ENCODE measurements at regions of chr5 and their contacts with region 1.

Region 1: DNA sequence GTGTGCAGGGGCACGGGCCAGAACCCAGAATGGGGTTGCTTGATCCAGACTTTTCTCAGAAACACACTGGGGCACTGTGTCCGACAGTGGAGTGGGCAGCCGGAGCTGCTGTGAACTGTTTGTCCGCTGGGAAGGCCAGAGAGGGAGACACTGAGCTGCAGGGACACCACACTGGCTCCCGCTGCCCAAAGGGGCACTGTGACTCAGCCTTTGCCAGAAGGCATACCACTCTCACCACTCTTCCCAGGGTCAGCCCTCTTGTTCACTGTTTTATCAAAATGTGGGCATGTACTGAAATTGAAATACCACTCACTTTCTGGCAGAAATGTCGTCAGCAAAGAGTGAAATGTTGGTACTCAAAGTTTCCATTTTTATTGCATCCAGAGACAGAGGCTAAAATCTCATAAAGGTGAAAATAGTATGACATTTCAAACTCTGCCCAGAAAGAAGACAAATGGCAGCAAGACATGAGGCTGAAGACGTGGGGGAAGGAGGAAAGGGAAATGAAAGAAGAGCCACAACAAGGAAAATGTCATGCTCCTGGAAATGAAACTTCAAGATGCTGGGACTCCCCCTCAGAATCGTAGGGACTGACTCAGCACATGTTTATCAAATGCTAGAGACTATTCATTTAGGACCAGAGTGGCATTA is 4.5 kb upstream of the IL7R start:
- DNase-seq: peak; percentile 60 to 81 (median 62)
- H3K4me3 ChIP-seq: peak overlapping the region; percentile 54 to 71
- H3K4me3 Mint-ChIP-seq: peak overlapping the region; percentile 87 to 99 (median 95)
- H3K27ac ChIP-seq: peak overlapping the region; percentile 97
- H3K27ac Mint-ChIP-seq: peak overlapping the region; percentile 94 to 100 (median 100)
- H3K4me1 ChIP-seq: peaks cover 75% of the 10 kb centered on the region
- H3K4me1 Mint-ChIP-seq: peaks cover 52 to 85% (median 70%) of the 10 kb centered on the region in 4 donors
- H3K27me3 ChIP-seq: no peaks in the 10 kb centered on the region
- H3K27me3 Mint-ChIP-seq: no peaks in the 10 kb centered on the region

Region 2: GRCh38 chr5:35308421-35308820 is 543.8 kb before region 1 on chr5:
- CTCF ChIA-PET with region 1: no interaction called
- POLR2A ChIA-PET with region 1: no interaction called
- intact Hi-C with region 1: no loop called
- DNase-seq: no peak
- H3K4me3 ChIP-seq: no peak overlapping the region
- H3K4me3 Mint-ChIP-seq: no peak overlapping the region
- H3K27ac ChIP-seq: no peak overlapping the region
- H3K27ac Mint-ChIP-seq: no peak overlapping the region
- H3K4me1 ChIP-seq: no peaks in the 10 kb centered on the region
- H3K4me1 Mint-ChIP-seq: no peaks in the 10 kb centered on the region
- H3K27me3 ChIP-seq: no peaks in the 10 kb centered on the region
- H3K27me3 Mint-ChIP-seq: peaks cover 6 to 11% of the 10 kb centered on the region in 2 donors

Region 3: GRCh38 chr5:35672995-35673394 is 179.2 kb before region 1 on chr5:
- CTCF ChIA-PET with region 1: no interaction called
- POLR2A ChIA-PET with region 1: interaction called, 64 read pairs
- intact Hi-C with region 1: no loop called
- DNase-seq: peak; percentile 32 to 63 (median 54)
- H3K4me3 ChIP-seq: no peak overlapping the region
- H3K4me3 Mint-ChIP-seq: peak overlapping the region in 7 of 8 donors; percentile 31 to 76 (median 47)
- H3K27ac ChIP-seq: peak overlapping the region; percentile 7
- H3K27ac Mint-ChIP-seq: peak overlapping the region; percentile 68 to 92 (median 86)
- H3K4me1 ChIP-seq: peaks cover 58% of the 10 kb centered on the region
- H3K4me1 Mint-ChIP-seq: peaks cover 43 to 68% (median 54%) of the 10 kb centered on the region in 4 donors
- H3K27me3 ChIP-seq: no peaks in the 10 kb centered on the region
- H3K27me3 Mint-ChIP-seq: no peaks in the 10 kb centered on the region

Region 4: DNA sequence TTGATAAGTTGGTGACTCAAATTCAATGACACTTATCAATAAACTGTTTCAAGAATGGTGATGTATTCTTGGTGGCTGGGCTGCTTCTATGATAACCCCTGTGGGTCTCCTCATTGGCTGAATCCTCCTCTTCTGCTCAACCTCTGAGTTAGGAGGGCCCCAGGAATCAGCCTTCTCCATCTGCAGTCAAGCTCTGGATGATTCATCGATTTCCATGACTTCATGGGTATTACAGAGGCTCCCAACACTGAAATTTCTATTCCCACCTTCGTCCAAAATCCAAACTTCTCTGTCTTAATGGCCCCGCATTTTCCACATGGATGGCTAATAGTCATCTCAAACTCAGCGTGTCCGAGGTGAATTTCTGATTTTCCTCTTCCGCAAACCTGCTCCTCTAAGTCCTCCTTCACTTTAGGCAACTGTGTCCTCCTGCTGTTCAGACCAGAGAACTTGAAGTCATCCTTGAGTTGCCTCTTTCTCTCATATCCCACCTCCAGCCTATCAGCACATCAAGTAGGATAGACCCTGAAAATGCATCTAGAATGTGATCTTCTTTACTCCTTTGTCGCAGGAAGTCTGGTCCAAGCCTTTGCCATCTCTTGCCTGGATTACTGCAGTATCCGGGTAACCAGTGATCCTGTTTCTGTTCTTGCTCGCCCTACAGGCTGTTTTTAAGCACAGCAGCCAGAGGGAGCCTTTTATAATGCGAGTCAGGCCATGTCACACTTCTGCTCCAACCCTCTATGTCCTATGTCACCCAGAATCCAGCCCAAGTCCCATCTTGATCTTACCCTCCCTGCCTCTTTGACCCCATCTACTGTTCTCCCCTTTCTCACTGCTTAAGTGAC is 36.9 kb before region 1 on chr5:
- CTCF ChIA-PET with region 1: interaction called, 325 read pairs
- POLR2A ChIA-PET with region 1: interaction called, 2,275 read pairs
- intact Hi-C with region 1: loop called (anchors 1 kb)
- DNase-seq: peak in 3 of 5 donors; percentile 51 to 55 (median 53)
- H3K4me3 ChIP-seq: peak overlapping the region in 1 of 2 donors; percentile 26
- H3K4me3 Mint-ChIP-seq: no peak overlapping the region
- H3K27ac ChIP-seq: peak overlapping the region; percentile 47
- H3K27ac Mint-ChIP-seq: no peak overlapping the region
- H3K4me1 ChIP-seq: peaks cover 97% of the 10 kb centered on the region
- H3K4me1 Mint-ChIP-seq: peaks cover 32 to 43% (median 36%) of the 10 kb centered on the region in 4 donors
- H3K27me3 ChIP-seq: no peaks in the 10 kb centered on the region
- H3K27me3 Mint-ChIP-seq: no peaks in the 10 kb centered on the region

Region 5: DNA sequence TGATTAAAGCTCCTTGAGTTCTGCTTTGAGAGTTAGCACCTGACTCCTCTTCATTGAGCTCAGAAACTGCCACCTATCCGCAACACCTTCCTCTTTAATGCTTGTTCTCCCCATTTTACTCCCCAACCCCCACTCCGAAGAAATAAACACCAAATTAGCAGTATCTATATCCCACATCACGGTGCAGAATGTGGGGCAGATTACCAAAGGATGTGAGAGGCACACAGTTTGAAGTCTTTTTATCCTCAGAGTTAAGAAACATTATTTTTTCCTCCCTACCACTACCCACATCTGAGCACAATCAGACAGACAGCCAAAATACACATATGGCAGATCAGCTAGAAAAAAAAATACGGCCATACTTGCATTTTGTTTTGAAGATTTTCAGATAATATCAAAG is 21.6 kb before region 1 on chr5:
- CTCF ChIA-PET with region 1: interaction called, 325 read pairs
- POLR2A ChIA-PET with region 1: interaction called, 2,275 read pairs
- intact Hi-C with region 1: loop called (anchors 1 kb)
- DNase-seq: peak; percentile 80 to 90 (median 85)
- H3K4me3 ChIP-seq: peak overlapping the region in 1 of 2 donors; percentile 41
- H3K4me3 Mint-ChIP-seq: peak overlapping the region; percentile 21 to 72 (median 56)
- H3K27ac ChIP-seq: peak overlapping the region; percentile 45
- H3K27ac Mint-ChIP-seq: peak overlapping the region; percentile 57 to 99 (median 84)
- H3K4me1 ChIP-seq: peaks cover 97% of the 10 kb centered on the region
- H3K4me1 Mint-ChIP-seq: peaks cover 67 to 96% (median 88%) of the 10 kb centered on the region in 4 donors
- H3K27me3 ChIP-seq: no peaks in the 10 kb centered on the region
- H3K27me3 Mint-ChIP-seq: no peaks in the 10 kb centered on the region

Region 6: DNA sequence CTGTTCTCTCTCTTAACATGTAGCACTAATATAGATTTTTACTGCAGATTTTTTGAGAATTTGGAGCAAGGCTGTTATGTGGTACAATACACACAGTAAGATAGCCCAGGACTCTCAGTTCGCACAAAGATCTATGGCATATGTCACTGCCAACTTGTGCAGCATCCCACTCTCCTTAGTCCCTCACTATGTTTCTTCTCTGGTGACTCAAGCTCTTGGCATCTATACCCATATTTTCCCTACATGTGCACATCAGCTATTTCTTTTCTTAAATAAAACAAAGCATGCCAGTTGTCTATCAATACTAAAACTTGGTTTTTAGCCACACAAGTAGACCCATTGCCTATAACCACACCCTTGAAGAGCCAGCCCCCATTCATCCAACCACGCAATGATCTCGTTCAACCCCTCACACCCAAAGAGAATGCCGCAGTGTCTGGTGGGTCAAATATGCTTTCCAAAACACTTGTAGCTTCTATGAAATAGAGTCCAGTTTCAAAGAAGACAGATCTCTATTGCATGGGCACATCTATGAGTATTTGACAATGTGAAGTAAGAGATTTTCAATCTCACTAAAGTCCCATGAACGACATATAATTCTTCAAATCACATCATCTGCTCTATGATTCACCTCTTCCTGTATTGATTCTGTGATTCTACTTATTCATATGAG is 13.7 kb before region 1 on chr5:
- CTCF ChIA-PET with region 1: interaction called, 12 read pairs
- POLR2A ChIA-PET with region 1: interaction called, 2,275 read pairs
- intact Hi-C with region 1: no loop called
- DNase-seq: no peak
- H3K4me3 ChIP-seq: peak overlapping the region in 1 of 2 donors; percentile 3
- H3K4me3 Mint-ChIP-seq: peak overlapping the region in 7 of 8 donors; percentile 36 to 86 (median 67)
- H3K27ac ChIP-seq: no peak overlapping the region
- H3K27ac Mint-ChIP-seq: peak overlapping the region; percentile 68 to 94 (median 93)
- H3K4me1 ChIP-seq: peaks cover 73% of the 10 kb centered on the region
- H3K4me1 Mint-ChIP-seq: peaks cover 55 to 80% (median 69%) of the 10 kb centered on the region in 4 donors
- H3K27me3 ChIP-seq: no peaks in the 10 kb centered on the region
- H3K27me3 Mint-ChIP-seq: no peaks in the 10 kb centered on the region

Region 7: DNA sequence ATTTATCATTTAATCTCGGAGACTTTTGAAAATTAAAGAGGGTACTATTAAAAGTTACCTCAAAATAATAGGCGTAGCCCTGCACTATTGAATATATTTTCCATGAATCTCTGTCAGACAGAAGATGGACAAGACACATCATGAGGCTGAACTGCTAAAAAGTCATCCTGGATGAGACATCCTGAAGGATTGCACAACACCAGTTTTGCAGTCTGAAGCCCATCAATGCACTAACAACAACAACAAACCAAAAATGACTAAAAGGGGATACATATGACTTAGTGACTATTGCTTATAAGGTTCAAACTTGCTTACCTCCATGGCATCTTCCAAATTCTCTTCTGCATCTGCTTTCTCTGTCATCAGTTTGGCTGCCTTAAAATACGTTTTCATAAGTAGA is 283.8 kb after region 1 on chr5:
- CTCF ChIA-PET with region 1: no interaction called
- POLR2A ChIA-PET with region 1: no interaction called
- intact Hi-C with region 1: no loop called
- DNase-seq: no peak
- H3K4me3 ChIP-seq: no peak overlapping the region
- H3K4me3 Mint-ChIP-seq: no peak overlapping the region
- H3K27ac ChIP-seq: no peak overlapping the region
- H3K27ac Mint-ChIP-seq: no peak overlapping the region
- H3K4me1 ChIP-seq: no peaks in the 10 kb centered on the region
- H3K4me1 Mint-ChIP-seq: peaks cover 4 to 9% (median 7%) of the 10 kb centered on the region in 4 donors
- H3K27me3 ChIP-seq: no peaks in the 10 kb centered on the region
- H3K27me3 Mint-ChIP-seq: no peaks in the 10 kb centered on the region